Activated CD4-positive, alpha-beta memory T cell treated with anti-CD3 and anti-CD28 coated beads for 36 hours (primary cell): ENCODE measurements at regions of chr2 and their contacts with region 1.

Region 1: GRCh38 chr2:43131024-43131889 is 95.1 kb downstream of the ZFP36L2 start:
- DNase-seq: peak; percentile 91
- H3K4me3 Mint-ChIP-seq: peak overlapping the region; percentile 11
- H3K27ac Mint-ChIP-seq: peak overlapping the region; percentile 89
- H3K4me1 Mint-ChIP-seq: peaks cover 88% of the 10 kb centered on the region
- H3K27me3 Mint-ChIP-seq: no peaks in the 10 kb centered on the region

Region 2: DNA sequence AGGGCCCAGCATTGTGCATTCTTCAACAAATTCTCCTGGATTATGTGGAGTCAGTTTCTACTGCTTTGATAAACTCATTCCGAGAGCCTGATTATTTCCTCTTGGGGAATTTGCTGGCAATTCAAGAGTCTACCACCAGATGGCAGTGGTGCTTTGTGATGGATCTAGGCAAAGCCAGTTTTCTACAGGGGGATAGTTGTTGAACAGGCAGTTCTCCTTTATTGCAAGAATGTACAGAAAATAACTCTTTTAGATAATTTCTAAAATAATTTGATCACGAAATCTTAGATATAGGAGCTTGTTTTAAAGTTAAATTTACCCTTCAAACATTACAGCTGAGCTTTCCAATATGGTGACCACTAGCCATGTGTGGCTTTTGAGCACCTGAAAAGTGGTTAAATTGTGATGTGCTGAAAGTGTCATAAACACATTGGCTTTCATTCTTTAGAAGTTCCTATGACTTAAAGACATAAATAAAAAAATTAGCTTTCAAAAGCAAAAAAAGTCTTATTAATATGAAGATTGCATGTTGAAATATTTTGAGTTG is 272.2 kb before region 1 on chr2:
- CTCF ChIA-PET with region 1: interaction called, 6 read pairs
- POLR2A ChIA-PET with region 1: no interaction called
- intact Hi-C with region 1: loop called (anchors 5 kb)
- DNase-seq: peak; percentile 81
- H3K4me3 Mint-ChIP-seq: no peak overlapping the region
- H3K27ac Mint-ChIP-seq: no peak overlapping the region
- H3K4me1 Mint-ChIP-seq: peaks cover 6% of the 10 kb centered on the region
- H3K27me3 Mint-ChIP-seq: no peaks in the 10 kb centered on the region

Region 3: GRCh38 chr2:43158259-43158880 is 27.1 kb after region 1 on chr2:
- CTCF ChIA-PET with region 1: interaction called, 4 read pairs
- POLR2A ChIA-PET with region 1: no interaction called
- intact Hi-C with region 1: loop called (anchors 1 kb)
- DNase-seq: peak; percentile 85
- H3K4me3 Mint-ChIP-seq: peak overlapping the region; percentile 74
- H3K27ac Mint-ChIP-seq: peak overlapping the region; percentile 99
- H3K4me1 Mint-ChIP-seq: peaks cover 59% of the 10 kb centered on the region
- H3K27me3 Mint-ChIP-seq: no peaks in the 10 kb centered on the region

Region 4: GRCh38 chr2:43184339-43184895 is 53.2 kb after region 1 on chr2:
- CTCF ChIA-PET with region 1: interaction called, 3 read pairs
- POLR2A ChIA-PET with region 1: no interaction called
- intact Hi-C with region 1: loop called (anchors 2 kb)
- DNase-seq: peak; percentile 85
- H3K4me3 Mint-ChIP-seq: peak overlapping the region; percentile 48
- H3K27ac Mint-ChIP-seq: peak overlapping the region; percentile 85
- H3K4me1 Mint-ChIP-seq: peaks cover 50% of the 10 kb centered on the region
- H3K27me3 Mint-ChIP-seq: no peaks in the 10 kb centered on the region

Region 5: DNA sequence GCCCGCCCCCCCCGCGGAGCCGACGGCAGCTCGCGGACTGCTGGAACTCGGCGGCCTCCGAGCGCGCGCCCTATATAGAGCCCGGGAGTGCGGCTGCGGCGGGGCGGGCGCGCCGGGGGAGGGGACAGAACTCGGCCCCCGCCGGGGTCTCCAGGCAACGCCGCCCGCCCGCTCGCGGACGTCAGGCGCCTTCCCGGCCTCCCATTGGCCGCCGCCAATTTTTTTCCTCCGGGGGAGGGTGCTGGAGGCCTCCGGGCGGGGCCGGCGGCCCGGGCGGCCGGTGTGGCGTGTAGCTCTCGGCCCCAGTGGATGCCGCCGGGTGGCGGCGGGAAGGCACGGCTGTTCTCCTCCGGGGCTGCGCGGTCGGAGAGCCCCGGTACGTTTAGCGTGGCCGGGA is 95.3 kb after region 1 on chr2 and contains the start of gene ZFP36L2:
- CTCF ChIA-PET with region 1: interaction called, 419 read pairs
- POLR2A ChIA-PET with region 1: interaction called, 283 read pairs
- intact Hi-C with region 1: loop called (anchors 1 kb)
- DNase-seq: peak; percentile 96
- H3K4me3 Mint-ChIP-seq: peak within 1 kb of the TSS; percentile 94
- H3K27ac Mint-ChIP-seq: peak within 1 kb of the TSS; percentile 96
- H3K4me1 Mint-ChIP-seq: peaks cover 32% of the 10 kb centered on the region
- H3K27me3 Mint-ChIP-seq: no peaks in the 10 kb centered on the region
- total RNA-seq, gene ZFP36L2: 78.4 to 79.8 TPM

Region 6: GRCh38 chr2:43484323-43484930 is 353.2 kb after region 1 on chr2:
- CTCF ChIA-PET with region 1: interaction called, 53 read pairs
- POLR2A ChIA-PET with region 1: no interaction called
- intact Hi-C with region 1: loop called (anchors 1 kb)
- DNase-seq: no peak
- H3K4me3 Mint-ChIP-seq: no peak overlapping the region
- H3K27ac Mint-ChIP-seq: no peak overlapping the region
- H3K4me1 Mint-ChIP-seq: peaks cover 10% of the 10 kb centered on the region
- H3K27me3 Mint-ChIP-seq: no peaks in the 10 kb centered on the region